ENCODE measurements at regions of chr7 and their contacts with region 1.

Region 1: GRCh38 chr7:116258734-116259133 is 48.4 kb downstream of the TES start:
- DNase-seq: no peak
- H3K4me3 ChIP-seq: no peak overlapping the region
- H3K27ac ChIP-seq: no peak overlapping the region
- H3K27me3 ChIP-seq: no peaks in the 10 kb centered on the region
- CTCF ChIP-seq: peak; percentile 76

Region 2: DNA sequence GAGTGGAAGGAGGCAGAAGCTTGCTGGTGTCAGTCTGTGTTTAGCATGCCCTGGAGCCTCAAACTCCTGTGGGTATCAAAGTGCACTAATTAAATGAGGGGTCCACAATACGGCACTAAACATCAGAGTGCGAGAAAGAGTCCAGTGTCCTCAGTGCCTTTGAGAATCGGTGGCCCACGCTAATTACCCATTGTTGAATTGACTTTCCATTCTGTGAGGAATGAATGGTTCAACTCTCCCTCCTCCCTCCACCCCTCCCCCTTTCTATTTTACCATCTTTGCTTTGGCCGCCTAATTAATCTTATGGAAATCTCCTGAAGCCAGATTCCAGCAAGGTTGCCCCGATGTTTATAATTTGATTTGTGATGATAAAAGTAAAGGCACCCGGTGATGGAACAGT is 445.9 kb before region 1 on chr7:
- CTCF ChIA-PET with region 1: no interaction called
- POLR2A ChIA-PET with region 1: no interaction called
- DNase-seq: no peak
- H3K4me3 ChIP-seq: no peak overlapping the region
- H3K27ac ChIP-seq: no peak overlapping the region
- H3K27me3 ChIP-seq: no peaks in the 10 kb centered on the region
- CTCF ChIP-seq: no peak

Region 3: GRCh38 chr7:116138202-116138801 is 120.4 kb before region 1 on chr7:
- CTCF ChIA-PET with region 1: interaction called, 11 read pairs
- POLR2A ChIA-PET with region 1: no interaction called
- DNase-seq: peak; percentile 57
- H3K4me3 ChIP-seq: no peak overlapping the region
- H3K27ac ChIP-seq: no peak overlapping the region
- H3K27me3 ChIP-seq: no peaks in the 10 kb centered on the region
- CTCF ChIP-seq: peak; percentile 89

Region 4: DNA sequence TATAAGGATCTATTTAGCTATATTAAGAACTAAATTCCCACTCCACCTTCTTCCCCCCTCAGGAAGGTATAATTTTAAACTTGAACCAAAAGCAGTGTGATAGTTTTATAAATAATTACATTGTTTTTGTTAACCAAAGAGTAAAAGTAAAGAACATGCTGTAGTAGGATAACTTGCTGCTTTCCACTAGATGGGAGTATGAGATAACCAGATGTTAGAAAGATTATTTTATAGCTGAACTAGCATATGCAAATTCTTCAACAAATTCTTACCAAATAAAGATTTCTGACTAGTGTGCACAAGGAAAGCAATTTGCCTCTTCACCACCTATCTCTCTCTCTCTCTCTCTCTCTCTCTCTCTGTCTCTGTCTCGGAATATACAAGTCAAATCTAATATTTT is 16.6 kb before region 1 on chr7:
- CTCF ChIA-PET with region 1: interaction called, 10 read pairs
- POLR2A ChIA-PET with region 1: no interaction called
- DNase-seq: no peak
- H3K4me3 ChIP-seq: no peak overlapping the region
- H3K27ac ChIP-seq: no peak overlapping the region
- H3K27me3 ChIP-seq: no peaks in the 10 kb centered on the region
- CTCF ChIP-seq: peak; percentile 44

Region 5: GRCh38 chr7:116478834-116479233 is 220.1 kb after region 1 on chr7:
- CTCF ChIA-PET with region 1: no interaction called
- POLR2A ChIA-PET with region 1: no interaction called
- DNase-seq: no peak
- H3K4me3 ChIP-seq: no peak overlapping the region
- H3K27ac ChIP-seq: no peak overlapping the region
- H3K27me3 ChIP-seq: no peaks in the 10 kb centered on the region
- CTCF ChIP-seq: no peak

Region 6: GRCh38 chr7:116495737-116496136 is 237.0 kb after region 1 on chr7:
- CTCF ChIA-PET with region 1: interaction called, 10 read pairs
- POLR2A ChIA-PET with region 1: interaction called, 12 read pairs
- DNase-seq: no peak
- H3K4me3 ChIP-seq: no peak overlapping the region
- H3K27ac ChIP-seq: no peak overlapping the region
- H3K27me3 ChIP-seq: no peaks in the 10 kb centered on the region
- CTCF ChIP-seq: no peak

Region 7: GRCh38 chr7:116525913-116526861 is 267.5 kb after region 1 on chr7:
- CTCF ChIA-PET with region 1: interaction called, 110 read pairs
- POLR2A ChIA-PET with region 1: interaction called, 8 read pairs
- DNase-seq: peak; percentile 64
- H3K4me3 ChIP-seq: peak overlapping the region; percentile 97
- H3K27ac ChIP-seq: peak overlapping the region; percentile 98
- H3K27me3 ChIP-seq: no peaks in the 10 kb centered on the region
- CTCF ChIP-seq: peak; percentile 51

Region 8: DNA sequence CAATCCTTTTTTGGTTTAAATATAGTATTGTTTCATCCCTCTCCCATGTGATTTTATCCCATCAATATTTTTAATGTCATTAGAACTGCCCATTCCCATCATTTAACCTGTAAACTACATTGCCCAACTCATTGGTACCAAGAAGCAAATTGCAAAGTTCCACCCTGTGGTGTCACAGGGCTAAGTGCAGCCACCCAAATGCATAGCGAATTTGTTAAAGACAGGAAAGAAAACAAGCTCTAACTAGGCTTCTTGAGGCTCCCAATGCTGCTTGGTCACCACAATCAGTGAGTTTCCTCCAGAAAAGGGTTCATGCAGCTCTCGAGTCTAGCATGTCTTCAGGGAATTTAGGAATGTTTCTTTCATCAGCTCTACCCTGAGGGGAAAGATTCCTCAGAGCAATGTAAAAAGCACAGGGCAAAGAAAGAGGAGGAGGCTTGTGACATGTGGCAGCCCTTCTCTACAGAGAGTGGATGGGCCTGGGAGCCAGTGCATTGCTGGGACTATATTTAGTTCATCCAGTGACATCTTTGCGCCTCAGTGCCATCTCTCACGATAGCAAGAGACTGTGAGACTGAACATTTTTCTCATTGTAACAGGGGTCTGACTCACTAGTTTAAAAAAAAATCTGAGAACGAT is 324.2 kb after region 1 on chr7:
- CTCF ChIA-PET with region 1: interaction called, 132 read pairs
- POLR2A ChIA-PET with region 1: no interaction called
- DNase-seq: no peak
- H3K4me3 ChIP-seq: no peak overlapping the region
- H3K27ac ChIP-seq: peak overlapping the region; percentile 69
- H3K27me3 ChIP-seq: no peaks in the 10 kb centered on the region
- CTCF ChIP-seq: no peak